ENCODE measurements at regions of chr3 and their contacts with region 1.

Region 1: GRCh38 chr3:169846458-169847193 is 23.1 kb downstream of the LRRC31 start:
- DNase-seq: peak; percentile 92
- ATAC-seq: peak; percentile 99
- H3K4me3 ChIP-seq: no peak overlapping the region
- H3K27ac ChIP-seq: peak overlapping the region; percentile 68
- H3K4me1 ChIP-seq: peaks cover 16% of the 10 kb centered on the region
- H3K27me3 ChIP-seq: no peaks in the 10 kb centered on the region
- CTCF ChIP-seq: no peak

Region 2: DNA sequence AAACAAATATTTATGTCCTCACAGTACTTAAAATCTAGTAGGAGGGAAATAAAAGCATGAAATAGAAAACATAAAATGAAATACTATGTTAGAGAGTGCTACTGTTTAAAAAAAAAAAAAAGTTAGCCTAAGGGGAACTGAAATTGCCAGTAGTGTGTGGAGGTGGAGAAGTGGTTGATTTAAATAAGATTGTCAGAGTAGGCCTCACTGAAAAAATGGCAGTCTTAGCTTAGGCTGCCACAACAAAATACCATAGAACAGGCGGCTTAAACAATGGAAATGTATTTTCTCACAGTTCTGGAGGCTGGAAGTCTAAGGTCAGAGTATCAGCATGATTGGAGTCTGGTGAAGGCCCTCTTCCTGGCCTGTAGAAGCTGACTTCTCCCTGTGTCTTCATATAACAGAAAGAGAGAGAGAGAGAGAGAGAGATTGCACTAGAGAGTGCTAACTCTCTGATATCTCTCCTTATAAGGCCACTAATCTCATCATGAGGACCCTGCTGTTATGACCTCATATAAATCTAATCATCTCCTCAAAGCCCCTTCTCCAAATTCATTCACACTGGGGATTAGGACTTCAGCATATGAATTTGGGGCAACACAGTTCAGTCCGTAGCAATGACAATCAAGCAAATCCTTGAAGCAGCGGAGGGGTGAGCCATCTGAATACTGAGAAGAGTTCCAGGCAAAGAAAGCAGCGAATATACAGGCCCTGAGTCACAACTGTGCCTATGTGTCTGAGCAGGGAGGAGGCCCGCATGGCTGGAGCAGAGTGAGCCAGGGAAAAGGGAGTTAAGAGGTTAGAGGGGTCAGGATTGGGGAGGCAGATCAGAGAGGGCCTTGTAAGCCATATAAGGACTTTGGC is 10.3 kb before region 1 on chr3:
- CTCF ChIA-PET with region 1: no interaction called
- POLR2A ChIA-PET with region 1: no interaction called
- intact Hi-C with region 1: loop called (anchors 2 kb)
- DNase-seq: no peak
- ATAC-seq: no peak
- H3K4me3 ChIP-seq: no peak overlapping the region
- H3K27ac ChIP-seq: no peak overlapping the region
- H3K4me1 ChIP-seq: no peaks in the 10 kb centered on the region
- H3K27me3 ChIP-seq: no peaks in the 10 kb centered on the region
- CTCF ChIP-seq: no peak